ENCODE measurements at regions of chr5 and their contacts with region 1.

Region 1: GRCh38 chr5:36739751-36740221 is 133.4 kb downstream of the SLC1A3 start:
- DNase-seq: peak; percentile 80
- H3K4me3 ChIP-seq: no peak overlapping the region
- H3K27ac ChIP-seq: no peak overlapping the region
- H3K4me1 ChIP-seq: no peaks in the 10 kb centered on the region
- H3K27me3 ChIP-seq: peaks cover 16 to 17% of the 10 kb centered on the region in 2 experiments
- CTCF ChIP-seq: peak; percentile 73 to 83
- POLR2A ChIP-seq: no peak

Region 2: GRCh38 chr5:36606428-36607113 is 133.2 kb before region 1 on chr5 and contains the start of gene SLC1A3:
- CTCF ChIA-PET with region 1: no interaction called
- POLR2A ChIA-PET with region 1: no interaction called
- dilution Hi-C with region 1: no loop called
- intact Hi-C with region 1: no loop called
- DNase-seq: peak; percentile 75
- H3K4me3 ChIP-seq: peak within 1 kb of the TSS; percentile 26 to 64 (median 37)
- H3K27ac ChIP-seq: no peak within 1 kb of the TSS
- H3K4me1 ChIP-seq: peaks cover 6% of the 10 kb centered on the region
- H3K27me3 ChIP-seq: peaks cover 17 to 36% of the 10 kb centered on the region in 2 experiments
- CTCF ChIP-seq: no peak
- POLR2A ChIP-seq: no peak
- total RNA-seq, gene SLC1A3: 0.44 TPM in 1 of 2 replicates, not detected in the other

Region 3: DNA sequence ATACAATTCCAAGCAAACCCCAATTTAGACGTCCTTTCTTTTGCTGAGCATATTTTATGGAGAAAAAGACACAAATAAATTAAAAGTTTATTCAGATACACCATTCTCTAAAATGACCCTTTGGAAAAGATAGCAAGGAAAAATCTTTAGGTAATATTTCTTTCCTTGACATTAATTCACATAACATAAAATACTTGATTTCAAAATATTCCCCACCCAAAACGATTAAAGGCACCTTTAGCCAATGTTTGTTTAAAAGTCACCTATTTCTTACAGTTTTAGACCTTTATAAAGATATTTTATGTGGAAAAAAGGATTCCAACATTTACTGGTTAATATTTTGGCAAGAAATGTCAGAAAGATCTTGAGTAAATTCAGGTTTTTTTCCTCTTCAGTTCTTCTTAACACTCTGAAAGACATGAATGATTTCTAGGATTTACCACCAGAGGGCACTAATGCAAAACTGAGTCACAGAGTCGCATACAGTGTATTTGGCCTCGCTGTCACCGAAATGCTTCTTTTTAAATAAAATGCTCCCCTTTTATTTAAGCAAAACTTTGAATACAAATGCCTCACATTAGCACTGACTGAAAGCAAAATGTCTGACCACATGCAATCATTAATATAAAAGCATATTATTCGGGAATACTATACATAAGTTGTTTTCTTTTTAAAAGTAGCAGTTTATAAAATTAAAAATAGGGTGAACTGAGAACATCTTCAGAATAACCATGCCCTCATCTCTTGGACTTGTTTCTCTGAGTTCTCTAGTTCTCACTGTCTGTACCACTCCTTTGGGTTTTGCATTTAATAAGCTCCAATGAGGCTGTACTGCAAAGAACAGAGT is 10.9 kb before region 1 on chr5:
- CTCF ChIA-PET with region 1: interaction called, 36 read pairs
- POLR2A ChIA-PET with region 1: no interaction called
- dilution Hi-C with region 1: no loop called
- intact Hi-C with region 1: no loop called
- DNase-seq: peak; percentile 68
- H3K4me3 ChIP-seq: no peak overlapping the region
- H3K27ac ChIP-seq: no peak overlapping the region
- H3K4me1 ChIP-seq: no peaks in the 10 kb centered on the region
- H3K27me3 ChIP-seq: peaks cover 0 to 3% of the 10 kb centered on the region in 2 experiments
- CTCF ChIP-seq: peak; percentile 38 to 52
- POLR2A ChIP-seq: no peak

Region 4: DNA sequence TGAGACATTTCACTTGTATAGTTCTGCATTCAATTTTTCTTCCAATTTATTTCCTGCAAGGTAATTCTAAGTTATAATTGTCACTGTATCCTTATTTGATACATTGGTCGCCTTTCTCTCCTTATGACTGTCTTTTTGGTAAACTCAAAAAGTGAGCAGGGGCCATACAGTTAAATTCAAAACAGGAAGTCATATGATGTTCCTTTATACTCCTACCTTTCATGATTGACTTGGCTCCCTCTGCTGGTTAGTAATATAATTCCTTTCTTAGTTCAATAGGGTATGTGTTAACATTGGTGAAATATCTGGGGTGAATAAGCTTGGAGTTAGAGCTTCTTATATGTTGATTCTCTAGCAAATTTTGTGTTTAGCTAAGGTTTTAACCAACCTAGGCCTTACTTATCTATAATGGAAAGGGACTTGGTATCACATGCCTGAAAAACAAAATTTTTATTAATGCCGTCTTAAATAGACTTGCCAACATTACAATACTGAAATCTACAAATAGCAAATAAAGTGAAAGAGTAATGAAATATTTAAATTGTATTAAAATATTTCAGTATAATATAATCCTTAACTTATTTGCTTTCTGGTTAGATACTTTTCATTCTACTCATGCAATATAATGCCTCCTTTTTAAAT is 130.7 kb after region 1 on chr5:
- CTCF ChIA-PET with region 1: interaction called, 20 read pairs
- POLR2A ChIA-PET with region 1: no interaction called
- dilution Hi-C with region 1: no loop called
- intact Hi-C with region 1: loop called (anchors 1 kb)
- DNase-seq: peak; percentile 58
- H3K4me3 ChIP-seq: no peak overlapping the region
- H3K27ac ChIP-seq: no peak overlapping the region
- H3K4me1 ChIP-seq: peaks cover 17% of the 10 kb centered on the region
- H3K27me3 ChIP-seq: no peaks in the 10 kb centered on the region
- CTCF ChIP-seq: peak; percentile 37 to 40
- POLR2A ChIP-seq: no peak

Region 5: GRCh38 chr5:36944607-36945225 is 204.9 kb after region 1 on chr5:
- CTCF ChIA-PET with region 1: interaction called, 10 read pairs
- POLR2A ChIA-PET with region 1: no interaction called
- dilution Hi-C with region 1: no loop called
- intact Hi-C with region 1: loop called (anchors 1 kb)
- DNase-seq: peak; percentile 69
- H3K4me3 ChIP-seq: no peak overlapping the region
- H3K27ac ChIP-seq: no peak overlapping the region
- H3K4me1 ChIP-seq: peaks cover 16% of the 10 kb centered on the region
- H3K27me3 ChIP-seq: no peaks in the 10 kb centered on the region
- CTCF ChIP-seq: peak; percentile 23 to 34
- POLR2A ChIP-seq: no peak

Region 6: DNA sequence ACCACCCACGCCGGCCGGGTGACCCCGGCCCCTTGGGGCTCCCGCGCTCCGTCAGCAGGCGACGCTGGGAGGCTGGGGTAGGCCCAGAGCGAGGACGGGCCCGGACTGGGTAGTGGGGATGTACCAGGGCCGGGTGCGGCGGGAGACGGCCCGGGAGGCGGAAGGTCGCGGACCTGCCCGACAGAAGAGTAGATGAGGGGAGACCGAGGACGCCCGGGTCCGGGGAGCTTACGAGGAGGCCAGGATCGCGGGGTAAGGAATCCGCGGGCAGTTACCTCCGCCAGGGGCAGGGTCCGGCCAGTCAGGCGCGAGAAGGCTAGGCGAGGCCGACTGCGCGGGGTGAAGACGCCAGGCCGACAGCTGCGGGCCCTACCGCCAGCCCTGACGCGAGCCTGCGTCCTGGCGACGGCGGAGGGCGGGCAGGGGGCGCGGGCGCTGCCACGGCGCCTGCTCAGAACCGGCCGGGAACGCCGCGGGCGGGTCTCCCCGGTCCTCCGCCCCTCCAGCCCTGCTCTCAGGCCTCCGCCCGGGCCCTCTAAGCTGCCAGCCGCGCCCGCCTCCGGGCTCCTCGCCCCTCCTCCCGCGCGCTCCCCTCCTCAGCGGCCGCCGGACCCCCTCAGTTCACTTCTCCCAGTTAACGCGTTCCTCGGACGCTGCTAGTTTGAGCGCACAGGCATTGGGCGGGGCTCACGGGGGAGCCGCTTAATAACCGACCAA is 509.3 kb after region 1 on chr5 and contains the start of gene CPLANE1:
- CTCF ChIA-PET with region 1: no interaction called
- POLR2A ChIA-PET with region 1: no interaction called
- dilution Hi-C with region 1: no loop called
- intact Hi-C with region 1: loop called (anchors 5 kb)
- DNase-seq: peak; percentile 87
- H3K4me3 ChIP-seq: peak within 1 kb of the TSS; percentile 96 to 97 (median 96)
- H3K27ac ChIP-seq: peak within 1 kb of the TSS; percentile 85
- H3K4me1 ChIP-seq: peaks cover 6% of the 10 kb centered on the region
- H3K27me3 ChIP-seq: no peaks in the 10 kb centered on the region
- CTCF ChIP-seq: no peak
- POLR2A ChIP-seq: peak; percentile 97
- total RNA-seq, gene CPLANE1: 16.9 and 21.5 TPM in 2 replicates